ENCODE measurements at regions of chr1 and their contacts with region 1.

Region 1: DNA sequence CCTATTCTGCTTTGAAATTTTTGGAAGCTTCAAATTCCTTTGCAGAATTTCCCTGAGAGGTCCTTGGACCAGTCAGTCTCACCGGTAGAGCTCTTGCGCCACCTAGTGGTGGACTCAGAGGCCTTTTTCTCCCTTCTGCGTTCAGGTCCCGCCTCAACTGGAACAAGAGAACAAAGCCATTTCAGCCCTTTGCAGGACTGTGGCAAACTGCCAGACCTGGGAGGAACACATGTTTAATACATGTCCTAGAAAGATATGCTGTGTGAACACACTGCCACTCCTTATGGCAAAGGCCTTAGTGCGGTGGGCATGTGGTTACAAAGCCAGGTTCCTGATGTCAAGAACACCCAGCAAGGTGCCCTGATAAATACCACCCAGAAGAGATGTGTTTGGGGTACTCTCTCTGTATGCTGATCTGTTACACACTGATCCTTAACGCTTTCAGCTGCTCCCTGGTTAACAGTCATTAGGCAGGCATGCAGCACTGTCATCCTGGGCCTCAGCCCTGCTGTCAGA is 82.2 kb upstream of the SSX2IP start:
- DNase-seq: peak; percentile 51 to 74 (median 64)
- ATAC-seq: peak; percentile 83
- H3K4me3 ChIP-seq: no peak overlapping the region
- H3K4me3 Mint-ChIP-seq: no peak overlapping the region
- H3K27ac ChIP-seq: no peak overlapping the region
- H3K27ac Mint-ChIP-seq: no peak overlapping the region
- H3K4me1 ChIP-seq: no peaks in the 10 kb centered on the region
- H3K4me1 Mint-ChIP-seq: peaks cover 0 to 4% (median 0%) of the 10 kb centered on the region in 7 donors
- H3K27me3 ChIP-seq: no peaks in the 10 kb centered on the region
- H3K27me3 Mint-ChIP-seq: peaks cover 5 to 31% (median 9%) of the 10 kb centered on the region in 5 donors

Region 2: DNA sequence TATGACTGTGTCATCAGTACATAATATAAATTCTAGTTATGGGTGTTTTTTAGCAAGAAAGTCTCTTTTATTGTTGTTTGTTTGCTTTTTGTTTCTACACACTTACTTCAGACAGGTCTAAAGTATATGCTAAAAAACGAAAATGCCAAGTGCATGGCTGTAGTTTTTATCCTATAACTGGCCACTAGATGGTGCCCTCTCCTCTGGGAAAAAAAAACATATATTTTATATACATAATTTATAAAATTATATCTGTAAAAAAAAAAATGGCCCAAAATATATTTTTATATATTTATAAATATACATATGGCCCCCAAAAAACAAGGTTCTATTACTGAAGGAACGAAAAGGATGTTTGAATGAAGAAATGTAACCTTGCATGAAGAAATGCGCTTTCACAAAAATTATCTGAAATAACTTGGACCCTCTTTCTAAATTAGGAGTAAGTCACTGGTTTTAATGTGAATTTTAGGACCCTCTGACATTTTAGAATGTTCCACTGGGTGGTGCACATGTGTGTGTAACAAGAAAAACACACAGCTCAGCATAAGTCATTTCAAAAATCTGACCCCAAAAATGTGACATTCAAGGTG is 867.1 kb before region 1 on chr1:
- CTCF ChIA-PET with region 1: no interaction called
- POLR2A ChIA-PET with region 1: no interaction called
- intact Hi-C with region 1: loop called (anchors 1 to 2 kb)
- DNase-seq: peak in 5 of 9 donors; percentile 16 to 34 (median 25)
- ATAC-seq: peak; percentile 53
- H3K4me3 ChIP-seq: no peak overlapping the region
- H3K4me3 Mint-ChIP-seq: no peak overlapping the region
- H3K27ac ChIP-seq: no peak overlapping the region
- H3K27ac Mint-ChIP-seq: no peak overlapping the region
- H3K4me1 ChIP-seq: no peaks in the 10 kb centered on the region
- H3K4me1 Mint-ChIP-seq: no peaks in the 10 kb centered on the region
- H3K27me3 ChIP-seq: no peaks in the 10 kb centered on the region
- H3K27me3 Mint-ChIP-seq: peaks cover 9 to 23% (median 20%) of the 10 kb centered on the region in 5 donors

Region 3: DNA sequence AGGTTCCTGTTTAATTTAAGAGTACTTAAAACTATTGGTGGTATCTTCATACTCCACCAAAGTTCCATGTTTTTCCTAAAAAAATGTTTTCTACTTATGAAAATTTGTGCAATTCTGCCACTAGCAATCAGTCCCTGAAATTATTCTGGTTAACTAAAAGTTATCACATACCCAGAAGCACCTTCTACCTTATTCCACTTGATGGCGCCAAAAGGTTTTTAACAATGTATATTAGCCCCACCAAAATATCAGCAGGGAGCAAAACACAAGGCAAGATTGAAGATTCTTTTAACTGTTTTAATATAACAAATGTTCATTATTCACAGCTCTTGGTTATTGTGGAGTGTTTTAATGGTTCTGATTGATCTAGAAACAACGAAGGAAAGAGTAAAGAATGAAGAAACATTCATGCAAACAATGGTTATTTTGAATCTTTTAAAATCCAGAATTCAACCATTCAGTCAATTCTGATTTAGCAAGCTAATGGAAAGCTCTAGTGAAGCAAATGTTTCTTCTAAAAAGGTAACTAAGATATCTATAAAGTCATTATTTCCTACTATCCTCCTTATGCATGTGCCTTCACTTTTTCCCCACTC is 840.7 kb before region 1 on chr1:
- CTCF ChIA-PET with region 1: interaction called, 5 read pairs
- POLR2A ChIA-PET with region 1: no interaction called
- intact Hi-C with region 1: loop called (anchors 1 to 2 kb)
- DNase-seq: peak in 7 of 9 donors; percentile 18 to 60 (median 45)
- ATAC-seq: peak; percentile 79
- H3K4me3 ChIP-seq: no peak overlapping the region
- H3K4me3 Mint-ChIP-seq: no peak overlapping the region
- H3K27ac ChIP-seq: no peak overlapping the region
- H3K27ac Mint-ChIP-seq: no peak overlapping the region
- H3K4me1 ChIP-seq: no peaks in the 10 kb centered on the region
- H3K4me1 Mint-ChIP-seq: no peaks in the 10 kb centered on the region
- H3K27me3 ChIP-seq: no peaks in the 10 kb centered on the region
- H3K27me3 Mint-ChIP-seq: peaks cover 4 to 19% (median 7%) of the 10 kb centered on the region in 5 donors

Region 4: DNA sequence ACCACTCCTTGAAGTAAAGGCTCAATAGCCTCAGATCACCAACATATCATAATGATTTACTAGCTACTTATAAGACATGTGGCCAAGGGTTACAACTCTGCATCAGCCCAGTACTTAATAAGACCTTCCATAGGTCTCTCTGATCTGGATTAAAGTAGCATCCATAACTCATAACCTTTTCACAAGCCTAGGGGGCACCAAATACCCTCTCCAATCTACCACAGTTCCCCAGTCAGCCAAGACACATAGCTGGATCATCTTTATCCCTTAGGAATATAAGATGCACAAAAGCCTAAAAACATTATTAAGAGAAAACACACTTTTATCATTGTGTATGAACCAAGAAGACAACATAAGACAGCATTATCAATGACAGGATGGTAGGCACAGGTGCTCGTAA is 104.3 kb before region 1 on chr1:
- CTCF ChIA-PET with region 1: no interaction called
- POLR2A ChIA-PET with region 1: no interaction called
- intact Hi-C with region 1: loop called in 1 of 2 experiments (anchors 1 kb)
- DNase-seq: peak in 2 of 9 donors; percentile 11 to 24
- ATAC-seq: peak; percentile 51
- H3K4me3 ChIP-seq: no peak overlapping the region
- H3K4me3 Mint-ChIP-seq: no peak overlapping the region
- H3K27ac ChIP-seq: no peak overlapping the region
- H3K27ac Mint-ChIP-seq: peak overlapping the region in 1 of 9 donors; percentile 34
- H3K4me1 ChIP-seq: peaks cover 0 to 2% of the 10 kb centered on the region in 2 donors
- H3K4me1 Mint-ChIP-seq: peaks cover 0 to 14% (median 10%) of the 10 kb centered on the region in 7 donors
- H3K27me3 ChIP-seq: no peaks in the 10 kb centered on the region
- H3K27me3 Mint-ChIP-seq: no peaks in the 10 kb centered on the region